ENCODE measurements at regions of chr9 and their contacts with region 1.

Region 1: GRCh38 chr9:37027582-37028419 is 6.3 kb downstream of the PAX5 start:
- DNase-seq: peak; percentile 93
- H3K4me3 ChIP-seq: peak overlapping the region in 2 of 3 experiments; percentile 14 to 19
- H3K27ac ChIP-seq: no peak overlapping the region
- H3K4me1 ChIP-seq: peaks cover 44% of the 10 kb centered on the region
- H3K27me3 ChIP-seq: peaks cover 73% of the 10 kb centered on the region
- CTCF ChIP-seq: no peak

Region 2: GRCh38 chr9:36772450-36773403 is 255.1 kb before region 1 on chr9:
- CTCF ChIA-PET with region 1: no interaction called
- dilution Hi-C with region 1: no loop called
- in situ Hi-C with region 1: no loop called
- intact Hi-C with region 1: no loop called
- DNase-seq: peak; percentile 40
- H3K4me3 ChIP-seq: no peak overlapping the region
- H3K27ac ChIP-seq: no peak overlapping the region
- H3K4me1 ChIP-seq: no peaks in the 10 kb centered on the region
- H3K27me3 ChIP-seq: peaks cover 4% of the 10 kb centered on the region
- CTCF ChIP-seq: no peak

Region 3: DNA sequence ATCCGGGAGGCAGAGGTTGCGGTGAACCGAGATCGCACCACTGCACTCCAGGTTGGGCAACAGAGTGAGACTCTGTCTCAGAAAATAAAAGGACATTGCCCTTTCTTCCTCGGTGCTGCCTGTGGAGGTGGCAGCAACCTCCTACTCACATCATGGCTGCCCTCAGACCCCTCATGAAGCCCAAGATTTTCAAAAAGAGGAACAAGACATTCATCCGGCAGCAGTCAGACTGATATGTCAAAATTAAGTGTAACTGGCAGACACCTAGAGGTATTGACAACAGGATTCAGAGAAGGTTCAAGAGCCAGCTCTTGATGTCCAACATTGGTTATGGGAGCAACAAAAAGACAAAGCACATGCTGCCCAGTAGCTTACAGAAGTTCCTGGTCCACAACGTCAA is 18.9 kb after region 1 on chr9:
- CTCF ChIA-PET with region 1: no interaction called
- dilution Hi-C with region 1: no loop called
- in situ Hi-C with region 1: no loop called
- intact Hi-C with region 1: no loop called
- DNase-seq: no peak
- H3K4me3 ChIP-seq: no peak overlapping the region
- H3K27ac ChIP-seq: no peak overlapping the region
- H3K4me1 ChIP-seq: no peaks in the 10 kb centered on the region
- H3K27me3 ChIP-seq: peaks cover 16% of the 10 kb centered on the region
- CTCF ChIP-seq: no peak

Region 4: DNA sequence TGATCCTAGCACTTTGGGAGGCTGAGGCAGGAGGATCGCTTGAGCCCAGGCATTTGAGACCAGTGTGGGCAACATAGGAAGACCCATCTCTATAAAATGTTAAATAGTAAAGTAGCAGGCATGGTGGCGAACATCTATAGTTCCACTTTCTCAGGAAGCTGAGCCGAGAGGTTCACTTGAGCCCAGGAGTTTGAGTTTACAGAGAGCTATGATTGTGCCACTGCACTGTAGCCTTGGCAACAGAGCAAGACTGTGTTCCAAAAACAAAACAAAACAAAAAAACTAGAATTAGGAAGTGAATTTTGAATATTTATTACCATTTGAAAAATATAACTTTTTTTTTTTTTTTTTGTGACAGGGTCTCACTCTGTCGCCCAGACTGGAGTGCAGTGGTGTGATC is 33.0 kb after region 1 on chr9:
- CTCF ChIA-PET with region 1: no interaction called
- dilution Hi-C with region 1: no loop called
- in situ Hi-C with region 1: no loop called
- intact Hi-C with region 1: no loop called
- DNase-seq: no peak
- H3K4me3 ChIP-seq: no peak overlapping the region
- H3K27ac ChIP-seq: no peak overlapping the region
- H3K4me1 ChIP-seq: no peaks in the 10 kb centered on the region
- H3K27me3 ChIP-seq: peaks cover under 1% of the 10 kb centered on the region
- CTCF ChIP-seq: no peak

Region 5: GRCh38 chr9:37119907-37120842 is 92.4 kb after region 1 on chr9 and contains the start of gene ZCCHC7:
- CTCF ChIA-PET with region 1: no interaction called
- dilution Hi-C with region 1: no loop called
- in situ Hi-C with region 1: no loop called
- intact Hi-C with region 1: loop called (anchors 2 kb)
- DNase-seq: peak; percentile 92
- H3K4me3 ChIP-seq: peak within 1 kb of the TSS; percentile 69 to 99 (median 93)
- H3K27ac ChIP-seq: peak within 1 kb of the TSS; percentile 84
- H3K4me1 ChIP-seq: peaks cover 9% of the 10 kb centered on the region
- H3K27me3 ChIP-seq: no peaks in the 10 kb centered on the region
- CTCF ChIP-seq: no peak
- total RNA-seq, gene ZCCHC7: 15.8 to 25.5 TPM

Region 6: GRCh38 chr9:37209431-37210386 is 181.9 kb after region 1 on chr9:
- CTCF ChIA-PET with region 1: no interaction called
- dilution Hi-C with region 1: no loop called
- in situ Hi-C with region 1: no loop called
- intact Hi-C with region 1: loop called (anchors 10 kb)
- DNase-seq: no peak
- H3K4me3 ChIP-seq: no peak overlapping the region
- H3K27ac ChIP-seq: no peak overlapping the region
- H3K4me1 ChIP-seq: no peaks in the 10 kb centered on the region
- H3K27me3 ChIP-seq: no peaks in the 10 kb centered on the region
- CTCF ChIP-seq: peak in 1 of 2 donors; percentile 39

Region 7: DNA sequence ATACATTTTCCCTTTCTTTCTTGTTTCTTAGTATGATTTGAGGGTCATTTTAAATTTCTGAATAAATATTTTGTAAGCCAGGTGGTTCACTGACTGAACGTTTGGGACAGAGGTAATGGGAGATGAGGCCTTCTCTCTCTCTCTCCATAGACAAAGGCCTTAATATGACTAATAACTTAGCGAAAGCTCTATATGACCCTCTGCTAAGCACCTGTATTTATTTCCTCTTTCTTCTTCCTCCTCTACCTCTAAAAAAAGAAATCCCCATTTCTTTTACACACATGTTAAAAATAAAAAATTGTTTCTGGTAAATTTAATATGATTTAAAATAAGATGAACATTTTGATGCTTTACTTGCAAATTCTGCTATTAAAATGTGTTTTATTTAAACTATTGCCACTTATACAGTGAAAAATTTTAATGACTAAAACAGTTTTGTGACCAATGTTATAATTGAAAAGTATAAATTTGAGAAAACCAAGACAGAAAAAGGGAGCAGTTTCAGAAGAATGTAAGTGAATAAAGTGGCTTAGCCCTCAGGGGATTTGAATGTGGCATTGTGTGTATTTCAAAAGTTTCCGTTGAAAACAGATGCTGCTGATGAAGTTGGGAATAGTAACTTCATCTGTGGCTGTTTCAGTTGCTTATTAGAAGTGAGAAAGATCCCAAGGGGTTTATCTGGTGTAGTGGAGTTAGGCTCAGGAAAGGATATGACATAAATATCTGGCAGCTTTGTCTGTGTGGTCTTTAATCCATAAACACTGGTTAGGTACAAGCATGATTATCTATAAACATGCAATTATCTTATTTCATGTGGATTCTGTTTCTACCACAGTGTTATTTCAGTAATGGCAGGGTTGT is 266.1 kb after region 1 on chr9:
- CTCF ChIA-PET with region 1: no interaction called
- dilution Hi-C with region 1: no loop called
- in situ Hi-C with region 1: no loop called
- intact Hi-C with region 1: loop called (anchors 10 kb)
- DNase-seq: no peak
- H3K4me3 ChIP-seq: no peak overlapping the region
- H3K27ac ChIP-seq: no peak overlapping the region
- H3K4me1 ChIP-seq: peaks cover 23% of the 10 kb centered on the region
- H3K27me3 ChIP-seq: no peaks in the 10 kb centered on the region
- CTCF ChIP-seq: no peak

Region 8: GRCh38 chr9:37371565-37372464 is 344.0 kb after region 1 on chr9:
- CTCF ChIA-PET with region 1: no interaction called
- dilution Hi-C with region 1: no loop called
- in situ Hi-C with region 1: no loop called
- intact Hi-C with region 1: loop called (anchors 10 kb)
- DNase-seq: no peak
- H3K4me3 ChIP-seq: no peak overlapping the region
- H3K27ac ChIP-seq: no peak overlapping the region
- H3K4me1 ChIP-seq: no peaks in the 10 kb centered on the region
- H3K27me3 ChIP-seq: no peaks in the 10 kb centered on the region
- CTCF ChIP-seq: no peak

Region 9: DNA sequence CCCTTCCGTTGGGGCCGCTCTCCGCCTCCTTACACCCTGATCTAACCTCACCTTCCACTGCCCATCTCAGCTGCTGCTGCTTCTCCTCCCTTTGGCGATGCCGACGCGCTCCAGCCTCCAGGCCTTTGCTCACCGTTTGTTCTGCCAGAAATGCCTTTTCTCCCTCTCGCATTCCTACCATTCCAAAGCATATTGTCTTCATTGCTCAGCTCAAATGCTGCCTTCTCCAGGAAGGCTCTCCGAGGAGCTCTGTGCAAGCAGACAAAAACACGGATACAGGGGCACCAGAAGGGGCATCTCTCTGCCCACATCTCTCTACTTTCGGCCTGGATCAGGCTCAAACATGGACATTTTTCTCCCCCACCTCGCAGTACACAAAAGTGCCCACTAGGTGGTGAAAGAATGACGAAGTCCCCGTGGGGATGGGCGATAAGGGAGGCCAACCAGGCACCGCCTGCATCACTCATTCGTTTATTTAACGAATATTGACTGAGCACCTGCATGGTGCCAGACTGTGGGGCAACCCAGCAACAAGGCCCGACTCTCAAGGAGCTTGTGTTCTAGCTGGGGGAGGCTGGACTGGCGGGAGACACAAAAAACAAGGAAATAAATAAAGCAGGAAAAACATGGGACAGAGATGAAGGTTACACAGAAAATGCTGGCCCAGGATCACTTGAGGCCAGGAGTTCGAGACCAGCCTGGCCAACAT is 387.4 kb after region 1 on chr9:
- CTCF ChIA-PET with region 1: interaction called, 4 read pairs
- dilution Hi-C with region 1: no loop called
- in situ Hi-C with region 1: no loop called
- intact Hi-C with region 1: loop called (anchors 10 kb)
- DNase-seq: peak; percentile 71
- H3K4me3 ChIP-seq: no peak overlapping the region
- H3K27ac ChIP-seq: no peak overlapping the region
- H3K4me1 ChIP-seq: peaks cover 46% of the 10 kb centered on the region
- H3K27me3 ChIP-seq: no peaks in the 10 kb centered on the region
- CTCF ChIP-seq: peak; percentile 83 to 86

Measured in mammary epithelial cell (primary cell).